ENCODE measurements at regions of chr22 and their contacts with region 1.

Region 1: GRCh38 chr22:19730655-19731360 is 7.5 kb downstream of the GP1BB start:
- DNase-seq: peak; percentile 91
- ATAC-seq: peak; percentile 90
- H3K4me3 ChIP-seq: peak overlapping the region; percentile 33
- H3K27ac ChIP-seq: no peak overlapping the region
- H3K4me1 ChIP-seq: peaks cover 3% of the 10 kb centered on the region
- H3K27me3 ChIP-seq: no peaks in the 10 kb centered on the region
- CTCF ChIP-seq: peak; percentile 93

Region 2: GRCh38 chr22:19463496-19464469 is 267.0 kb before region 1 on chr22:
- intact Hi-C with region 1: no loop called
- DNase-seq: no peak
- ATAC-seq: peak; percentile 73
- H3K4me3 ChIP-seq: no peak overlapping the region
- H3K27ac ChIP-seq: no peak overlapping the region
- H3K4me1 ChIP-seq: no peaks in the 10 kb centered on the region
- H3K27me3 ChIP-seq: no peaks in the 10 kb centered on the region
- CTCF ChIP-seq: no peak

Region 3: GRCh38 chr22:19644314-19645223 is 86.2 kb before region 1 on chr22:
- intact Hi-C with region 1: no loop called
- DNase-seq: no peak
- ATAC-seq: peak; percentile 30
- H3K4me3 ChIP-seq: no peak overlapping the region
- H3K27ac ChIP-seq: no peak overlapping the region
- H3K4me1 ChIP-seq: no peaks in the 10 kb centered on the region
- H3K27me3 ChIP-seq: peaks cover 6% of the 10 kb centered on the region
- CTCF ChIP-seq: no peak

Region 4: DNA sequence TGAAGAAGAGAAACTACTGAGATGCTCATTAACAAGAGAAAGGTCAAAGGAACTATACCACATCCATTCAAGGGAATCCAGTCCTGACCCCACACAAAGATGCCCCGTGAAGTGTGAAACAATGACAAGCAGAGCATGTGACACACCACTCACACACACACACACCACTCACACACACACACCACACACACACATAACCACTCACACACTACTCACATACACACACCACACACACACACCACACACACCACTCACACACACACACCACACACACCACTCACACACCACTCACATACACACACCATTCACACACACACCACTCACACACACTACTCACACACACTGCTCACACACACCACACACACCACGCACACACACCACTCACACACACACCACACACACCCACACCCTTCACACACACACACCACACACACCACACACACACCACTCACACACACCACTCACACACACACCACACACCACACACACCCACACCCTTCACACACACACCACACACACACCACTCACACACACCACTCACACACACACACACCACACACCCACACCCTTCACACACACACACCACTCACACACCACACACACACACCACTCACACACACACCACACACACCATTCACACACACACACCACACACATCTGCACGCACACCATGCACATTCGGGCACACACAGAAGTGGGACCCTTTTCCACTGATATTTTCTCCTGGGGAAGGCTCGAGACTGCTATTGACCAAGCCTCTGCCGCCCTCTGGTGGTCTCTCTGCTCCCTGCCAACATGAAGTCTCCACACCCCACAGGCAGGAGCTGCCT is 178.8 kb after region 1 on chr22:
- intact Hi-C with region 1: loop called (anchors 5 kb)
- DNase-seq: peak; percentile 88
- ATAC-seq: peak; percentile 95
- H3K4me3 ChIP-seq: no peak overlapping the region
- H3K27ac ChIP-seq: no peak overlapping the region
- H3K4me1 ChIP-seq: no peaks in the 10 kb centered on the region
- H3K27me3 ChIP-seq: no peaks in the 10 kb centered on the region
- CTCF ChIP-seq: peak; percentile 85

Measured in upper lobe of right lung (tissue), 1 donor.